Aorta (tissue), 5 donors: ENCODE measurements at regions of chr2 and their contacts with region 1.

Region 1: GRCh38 chr2:61016808-61017555 is 538 bp upstream of the PEX13 start:
- DNase-seq: peak; percentile 82 to 86
- ATAC-seq: peak; percentile 93
- H3K4me3 ChIP-seq: peak overlapping the region; percentile 95
- H3K27ac ChIP-seq: peak overlapping the region; percentile 30 to 73
- H3K4me1 ChIP-seq: peaks cover 0 to 2% of the 10 kb centered on the region in 2 donors
- H3K27me3 ChIP-seq: no peaks in the 10 kb centered on the region

Region 2: GRCh38 chr2:61065715-61066709 is 49.0 kb after region 1 on chr2 and contains the start of gene SANBR:
- intact Hi-C with region 1: loop called in 1 of 2 experiments (anchors 5 kb)
- DNase-seq: peak; percentile 92 to 94
- ATAC-seq: peak; percentile 98
- H3K4me3 ChIP-seq: peak within 1 kb of the TSS; percentile 84 to 91
- H3K27ac ChIP-seq: peak within 1 kb of the TSS in 1 of 2 donors; percentile 2
- H3K4me1 ChIP-seq: no peaks in the 10 kb centered on the region
- H3K27me3 ChIP-seq: no peaks in the 10 kb centered on the region
- total RNA-seq, gene SANBR: 9.8 to 17.7 TPM